CD8-positive, alpha-beta T cell (primary cell): ENCODE measurements at regions of chr20 and their contacts with region 1.

Region 1: GRCh38 chr20:15506311-15506710 is 1066.9 kb downstream of the KIF16B start:
- DNase-seq: no peak
- ATAC-seq: no peak
- H3K4me3 ChIP-seq: no peak overlapping the region
- H3K4me3 Mint-ChIP-seq: no peak overlapping the region
- H3K27ac ChIP-seq: no peak overlapping the region
- H3K27ac Mint-ChIP-seq: no peak overlapping the region
- H3K4me1 ChIP-seq: no peaks in the 10 kb centered on the region
- H3K4me1 Mint-ChIP-seq: no peaks in the 10 kb centered on the region
- H3K27me3 ChIP-seq: no peaks in the 10 kb centered on the region
- H3K27me3 Mint-ChIP-seq: no peaks in the 10 kb centered on the region
- CTCF ChIP-seq: no peak

Region 2: GRCh38 chr20:15528391-15529111 is 22.2 kb after region 1 on chr20:
- CTCF ChIA-PET with region 1: no interaction called
- POLR2A ChIA-PET with region 1: no interaction called
- intact Hi-C with region 1: no loop called
- DNase-seq: no peak
- ATAC-seq: no peak
- H3K4me3 ChIP-seq: no peak overlapping the region
- H3K4me3 Mint-ChIP-seq: no peak overlapping the region
- H3K27ac ChIP-seq: no peak overlapping the region
- H3K27ac Mint-ChIP-seq: no peak overlapping the region
- H3K4me1 ChIP-seq: no peaks in the 10 kb centered on the region
- H3K4me1 Mint-ChIP-seq: no peaks in the 10 kb centered on the region
- H3K27me3 ChIP-seq: no peaks in the 10 kb centered on the region
- H3K27me3 Mint-ChIP-seq: no peaks in the 10 kb centered on the region
- CTCF ChIP-seq: no peak

Region 3: GRCh38 chr20:15564981-15565380 is 58.7 kb after region 1 on chr20:
- CTCF ChIA-PET with region 1: no interaction called
- POLR2A ChIA-PET with region 1: no interaction called
- intact Hi-C with region 1: loop called in 1 of 2 experiments (anchors 10 kb)
- DNase-seq: no peak
- ATAC-seq: no peak
- H3K4me3 ChIP-seq: no peak overlapping the region
- H3K4me3 Mint-ChIP-seq: no peak overlapping the region
- H3K27ac ChIP-seq: no peak overlapping the region
- H3K27ac Mint-ChIP-seq: no peak overlapping the region
- H3K4me1 ChIP-seq: no peaks in the 10 kb centered on the region
- H3K4me1 Mint-ChIP-seq: no peaks in the 10 kb centered on the region
- H3K27me3 ChIP-seq: no peaks in the 10 kb centered on the region
- H3K27me3 Mint-ChIP-seq: no peaks in the 10 kb centered on the region
- CTCF ChIP-seq: no peak